Activated B cell treated with CpG ODN at 0.5 μM for 24 hours (primary cell): ENCODE measurements at regions of chr15 and their contacts with region 1.

Region 1: DNA sequence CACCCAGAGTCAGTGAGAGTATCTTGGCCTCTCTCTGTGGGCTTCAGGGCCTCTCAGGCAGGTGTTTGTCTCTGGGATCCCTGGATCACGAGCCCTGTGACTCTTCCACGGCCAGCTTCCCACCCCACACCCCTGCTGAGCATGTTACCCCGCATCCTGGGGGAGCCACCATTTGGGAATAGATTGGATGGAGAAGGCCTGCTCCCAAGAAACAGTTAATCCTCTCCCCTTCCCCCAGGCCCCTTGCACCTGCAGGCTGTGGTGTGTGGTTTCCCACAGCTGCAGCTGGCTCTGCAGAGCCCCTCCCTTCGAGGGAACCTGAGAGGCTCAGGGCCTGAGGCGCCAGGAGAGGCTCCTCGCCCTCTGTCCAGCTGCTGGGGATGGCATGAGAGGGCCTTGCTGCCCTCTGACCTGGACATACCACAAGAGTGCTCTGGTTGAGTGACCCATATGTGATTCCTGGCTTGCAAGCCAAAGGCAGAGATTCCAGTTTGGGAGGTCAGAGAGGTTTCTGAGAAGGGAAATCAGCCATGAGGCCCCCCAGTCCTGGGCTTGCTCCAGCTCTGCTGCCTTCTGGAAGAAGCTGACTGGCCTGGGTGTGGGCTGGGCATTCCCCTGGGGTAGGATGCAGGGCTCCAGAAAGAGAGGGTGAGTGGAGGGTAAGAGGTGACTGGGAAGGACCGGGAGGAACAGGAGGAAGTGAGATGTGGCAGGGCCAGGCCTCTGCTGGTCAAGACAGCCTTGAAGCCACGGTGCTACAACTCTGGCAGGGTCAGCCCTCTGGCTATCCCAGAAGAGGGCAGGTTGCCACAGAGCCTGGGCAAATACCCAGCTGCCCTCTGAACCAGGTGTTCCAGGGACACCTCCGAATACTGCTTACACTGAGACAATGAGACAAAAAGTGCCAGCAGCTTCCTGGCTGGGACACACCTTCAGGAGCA is 15.9 kb upstream of the SRP14 start:
- DNase-seq: peak; percentile 55
- ATAC-seq: peak; percentile 68
- H3K4me3 Mint-ChIP-seq: peak overlapping the region; percentile 61
- H3K27ac Mint-ChIP-seq: peak overlapping the region; percentile 91
- H3K4me1 Mint-ChIP-seq: peaks cover 67% of the 10 kb centered on the region
- H3K27me3 Mint-ChIP-seq: no peaks in the 10 kb centered on the region
- CTCF ChIP-seq: no peak

Region 2: DNA sequence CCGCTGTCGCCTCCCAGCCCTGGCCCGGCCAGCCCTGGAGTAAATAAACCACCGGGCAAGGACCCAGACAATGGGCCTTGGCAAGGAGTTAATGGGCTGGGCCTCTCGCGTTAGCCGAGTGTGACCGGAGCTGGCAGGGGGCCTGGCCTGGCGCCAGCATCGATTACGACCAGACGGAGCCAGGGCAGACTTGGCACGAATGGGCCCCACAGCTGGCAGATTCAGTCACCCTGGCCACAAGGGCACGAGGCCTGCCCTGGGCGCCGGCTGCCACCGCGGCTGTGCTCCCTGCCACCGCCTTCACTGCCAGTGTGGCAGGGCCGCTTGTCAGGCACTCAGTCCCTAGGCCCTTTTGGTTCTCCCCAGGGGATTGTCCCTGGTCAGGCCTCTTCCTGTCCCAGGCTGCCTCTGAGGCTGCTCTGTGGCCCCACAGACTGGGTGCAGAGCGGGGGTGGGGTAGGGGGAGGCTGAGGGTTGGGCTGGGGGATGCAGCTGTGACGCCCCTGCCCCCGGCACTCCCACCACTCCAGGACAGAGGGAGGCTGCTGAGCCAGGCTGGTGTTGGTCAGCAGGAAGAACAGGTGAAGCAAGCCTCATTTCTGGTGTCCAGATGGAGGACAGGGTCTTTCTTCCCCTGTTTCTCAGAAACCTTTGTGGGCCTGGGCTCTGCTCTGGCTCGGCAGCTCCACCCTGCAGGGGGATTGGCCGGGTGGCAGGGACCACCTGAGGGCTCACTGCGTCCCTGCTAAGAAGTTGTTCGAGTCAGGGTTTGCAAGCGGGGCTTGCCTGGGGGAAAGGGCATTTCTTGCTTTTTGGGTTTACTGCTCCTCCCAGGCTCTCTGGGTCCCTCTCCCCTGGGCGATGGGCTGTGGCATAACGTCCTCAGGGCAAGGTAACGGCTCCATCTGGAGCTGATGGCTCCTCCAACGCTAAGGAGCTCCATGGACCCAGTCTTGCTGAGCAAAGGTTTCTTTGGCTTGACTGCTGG is 14.6 kb after region 1 on chr15:
- CTCF ChIA-PET with region 1: interaction called, 3 read pairs
- POLR2A ChIA-PET with region 1: interaction called, 31 read pairs
- intact Hi-C with region 1: loop called (anchors 1 kb)
- DNase-seq: peak; percentile 59
- ATAC-seq: peak; percentile 76
- H3K4me3 Mint-ChIP-seq: peak overlapping the region; percentile 60
- H3K27ac Mint-ChIP-seq: peak overlapping the region; percentile 83
- H3K4me1 Mint-ChIP-seq: peaks cover 48% of the 10 kb centered on the region
- H3K27me3 Mint-ChIP-seq: no peaks in the 10 kb centered on the region
- CTCF ChIP-seq: no peak

Region 3: DNA sequence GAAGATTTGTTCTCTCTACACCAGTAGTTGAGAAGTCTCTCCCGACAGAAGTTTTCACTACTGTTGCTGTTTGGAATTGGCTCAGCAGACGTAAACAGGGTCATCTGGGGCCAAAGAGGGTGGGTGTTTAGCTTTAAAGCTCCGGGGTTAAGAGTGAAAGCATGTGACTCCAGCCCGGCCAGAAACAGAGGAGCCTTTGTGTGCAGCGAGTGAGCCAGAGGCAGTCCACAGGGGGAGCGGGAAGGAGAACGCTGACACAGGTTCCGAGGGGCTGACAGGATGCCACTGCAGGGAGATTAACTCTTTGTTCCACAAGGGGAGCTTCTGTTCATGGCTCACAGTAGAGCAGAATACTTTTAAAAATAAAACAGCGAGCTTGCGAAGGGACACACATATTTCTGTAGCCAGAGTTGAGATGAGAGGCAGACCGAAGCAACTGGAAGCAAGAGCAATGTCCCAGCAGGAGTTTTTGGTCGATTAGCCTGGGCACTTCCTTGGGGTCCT is 26.9 kb after region 1 on chr15:
- CTCF ChIA-PET with region 1: no interaction called
- POLR2A ChIA-PET with region 1: interaction called, 17 read pairs
- intact Hi-C with region 1: loop called (anchors 2 kb)
- DNase-seq: no peak
- ATAC-seq: no peak
- H3K4me3 Mint-ChIP-seq: peak overlapping the region; percentile 78
- H3K27ac Mint-ChIP-seq: peak overlapping the region; percentile 89
- H3K4me1 Mint-ChIP-seq: peaks cover 60% of the 10 kb centered on the region
- H3K27me3 Mint-ChIP-seq: no peaks in the 10 kb centered on the region
- CTCF ChIP-seq: no peak

Region 4: DNA sequence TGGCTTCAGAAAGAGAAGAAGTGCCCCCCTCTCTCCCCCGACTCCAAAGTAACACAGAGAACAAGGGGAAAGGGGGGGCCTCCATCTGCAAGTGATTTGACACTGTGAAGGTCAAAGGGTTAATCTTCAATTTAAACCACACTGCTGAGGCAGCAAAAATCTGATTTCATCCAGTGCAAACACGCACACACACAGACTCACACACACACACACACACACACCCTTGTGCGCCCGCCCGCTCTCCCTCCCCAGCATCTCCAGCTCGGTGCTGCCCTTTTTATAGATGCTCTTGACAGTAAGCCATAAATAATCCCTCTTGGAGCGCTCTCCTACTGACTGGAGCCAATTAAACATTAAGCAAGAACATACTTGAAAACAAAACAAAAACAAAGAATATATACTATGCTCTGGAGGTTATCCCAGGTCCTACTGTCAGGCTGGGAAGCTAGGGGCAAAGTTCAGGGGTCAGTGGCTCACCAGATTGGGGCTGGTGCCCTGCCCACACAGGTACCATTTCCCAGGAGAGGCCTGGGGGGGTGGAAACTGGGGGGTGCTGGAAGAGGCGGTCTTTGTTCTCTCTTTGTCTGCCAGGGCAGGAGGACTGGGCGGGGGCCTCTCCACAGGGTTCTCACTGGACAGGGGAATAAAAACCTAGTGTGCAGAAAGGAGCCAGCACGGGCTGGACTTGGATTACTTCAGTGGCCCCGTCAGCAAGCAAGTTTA is 37.5 kb after region 1 on chr15:
- CTCF ChIA-PET with region 1: interaction called, 519 read pairs
- POLR2A ChIA-PET with region 1: interaction called, 1,329 read pairs
- intact Hi-C with region 1: no loop called
- DNase-seq: no peak
- ATAC-seq: no peak
- H3K4me3 Mint-ChIP-seq: peak overlapping the region; percentile 48
- H3K27ac Mint-ChIP-seq: peak overlapping the region; percentile 99
- H3K4me1 Mint-ChIP-seq: peaks cover 72% of the 10 kb centered on the region
- H3K27me3 Mint-ChIP-seq: no peaks in the 10 kb centered on the region
- CTCF ChIP-seq: no peak